ENCODE measurements at regions of chr14 and their contacts with region 1.

Region 1: DNA sequence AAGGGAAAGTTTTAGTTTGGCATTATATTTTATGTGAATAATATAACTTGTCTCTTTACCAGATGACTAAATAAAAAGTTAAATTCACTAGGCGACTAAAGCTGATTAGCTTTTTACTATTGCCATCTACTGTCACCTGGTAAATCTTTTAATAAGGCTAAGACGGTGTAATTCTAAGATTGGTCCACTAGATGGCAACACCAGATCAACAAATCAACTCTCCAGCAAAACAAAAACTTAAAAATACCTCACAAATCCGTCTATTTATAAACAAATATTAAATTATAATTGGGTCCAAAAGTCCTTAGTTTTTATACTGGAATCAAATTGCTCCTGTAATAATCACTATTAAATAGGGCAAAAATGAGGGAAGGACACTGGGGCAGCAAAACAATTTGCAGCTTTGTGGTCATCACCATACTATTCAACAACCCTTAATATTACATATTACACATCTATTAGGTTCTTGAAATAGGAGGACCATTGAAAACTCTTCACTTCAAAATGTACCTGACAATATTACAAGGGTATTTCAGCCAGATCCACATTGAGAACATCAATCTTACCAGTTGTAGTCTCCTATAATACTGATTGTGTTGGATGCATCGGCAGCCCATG is 47.9 kb downstream of the GALC start:
- DNase-seq: peak in 2 of 9 experiments; percentile 74 to 79
- ATAC-seq: peak; percentile 69
- H3K4me3 ChIP-seq: no peak overlapping the region
- H3K4me3 Mint-ChIP-seq: no peak overlapping the region
- H3K27ac ChIP-seq: no peak overlapping the region
- H3K27ac Mint-ChIP-seq: no peak overlapping the region
- H3K4me1 ChIP-seq: peaks cover 4% of the 10 kb centered on the region
- H3K4me1 Mint-ChIP-seq: peaks cover 16% of the 10 kb centered on the region
- H3K27me3 ChIP-seq: no peaks in the 10 kb centered on the region
- H3K27me3 Mint-ChIP-seq: no peaks in the 10 kb centered on the region
- CTCF ChIP-seq: peak; percentile 90

Region 2: DNA sequence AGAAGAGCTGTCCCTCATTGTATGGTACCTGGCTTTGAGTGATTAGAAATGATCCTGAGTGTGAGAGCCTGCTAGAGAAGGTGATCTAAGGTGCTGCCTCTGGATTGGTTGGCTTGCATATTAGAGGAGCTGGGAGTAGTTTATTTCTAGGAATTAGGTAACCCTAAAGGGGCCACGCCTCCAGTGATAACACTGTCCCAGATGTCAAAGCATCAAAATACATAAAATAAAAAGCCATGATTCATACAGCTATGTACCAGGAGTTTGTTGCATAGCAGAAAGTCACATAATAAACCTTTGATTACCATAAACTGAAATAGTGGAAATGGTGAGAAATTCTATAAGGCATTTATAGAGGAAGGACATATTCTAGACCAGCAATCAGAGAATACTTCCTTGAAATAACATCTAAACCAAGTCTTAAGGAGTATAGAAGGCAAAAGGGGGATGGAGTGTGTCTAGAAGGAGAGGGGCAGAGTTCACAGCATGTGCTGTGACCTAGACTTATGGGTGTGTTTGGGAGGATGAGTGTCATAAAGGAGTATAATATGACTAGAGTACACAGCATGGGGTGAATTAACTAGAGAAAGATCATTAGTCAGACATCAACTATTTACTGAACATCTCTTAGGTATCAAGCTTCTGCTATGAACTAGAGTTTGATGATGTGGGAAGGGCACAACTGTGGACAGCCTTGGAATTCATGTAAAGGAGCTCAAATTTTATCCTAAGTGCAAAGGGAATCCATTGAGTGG is 638.5 kb before region 1 on chr14:
- CTCF ChIA-PET with region 1: no interaction called
- POLR2A ChIA-PET with region 1: no interaction called
- intact Hi-C with region 1: no loop called
- DNase-seq: no peak
- ATAC-seq: no peak
- H3K4me3 ChIP-seq: no peak overlapping the region
- H3K4me3 Mint-ChIP-seq: no peak overlapping the region
- H3K27ac ChIP-seq: no peak overlapping the region
- H3K27ac Mint-ChIP-seq: no peak overlapping the region
- H3K4me1 ChIP-seq: no peaks in the 10 kb centered on the region
- H3K4me1 Mint-ChIP-seq: no peaks in the 10 kb centered on the region
- H3K27me3 ChIP-seq: no peaks in the 10 kb centered on the region
- H3K27me3 Mint-ChIP-seq: no peaks in the 10 kb centered on the region
- CTCF ChIP-seq: no peak

Region 3: GRCh38 chr14:87979689-87980088 is 34.6 kb after region 1 on chr14:
- CTCF ChIA-PET with region 1: interaction called, 14 read pairs
- POLR2A ChIA-PET with region 1: no interaction called
- intact Hi-C with region 1: no loop called
- DNase-seq: no peak
- ATAC-seq: no peak
- H3K4me3 ChIP-seq: no peak overlapping the region
- H3K4me3 Mint-ChIP-seq: no peak overlapping the region
- H3K27ac ChIP-seq: no peak overlapping the region
- H3K27ac Mint-ChIP-seq: no peak overlapping the region
- H3K4me1 ChIP-seq: no peaks in the 10 kb centered on the region
- H3K4me1 Mint-ChIP-seq: peaks cover 5% of the 10 kb centered on the region
- H3K27me3 ChIP-seq: no peaks in the 10 kb centered on the region
- H3K27me3 Mint-ChIP-seq: no peaks in the 10 kb centered on the region
- CTCF ChIP-seq: no peak

Region 4: GRCh38 chr14:88078525-88078924 is 133.4 kb after region 1 on chr14:
- CTCF ChIA-PET with region 1: interaction called, 11 read pairs
- POLR2A ChIA-PET with region 1: no interaction called
- intact Hi-C with region 1: no loop called
- DNase-seq: peak in 2 of 9 experiments; percentile 8 to 16
- ATAC-seq: no peak
- H3K4me3 ChIP-seq: no peak overlapping the region
- H3K4me3 Mint-ChIP-seq: no peak overlapping the region
- H3K27ac ChIP-seq: no peak overlapping the region
- H3K27ac Mint-ChIP-seq: no peak overlapping the region
- H3K4me1 ChIP-seq: no peaks in the 10 kb centered on the region
- H3K4me1 Mint-ChIP-seq: no peaks in the 10 kb centered on the region
- H3K27me3 ChIP-seq: no peaks in the 10 kb centered on the region
- H3K27me3 Mint-ChIP-seq: no peaks in the 10 kb centered on the region
- CTCF ChIP-seq: no peak

Region 5: GRCh38 chr14:88168498-88169165 is 223.5 kb after region 1 on chr14:
- CTCF ChIA-PET with region 1: interaction called, 120 read pairs
- POLR2A ChIA-PET with region 1: interaction called, 3 read pairs
- intact Hi-C with region 1: loop called (anchors 1 kb)
- DNase-seq: peak; percentile 24 to 77 (median 55)
- ATAC-seq: peak; percentile 96
- H3K4me3 ChIP-seq: no peak overlapping the region
- H3K4me3 Mint-ChIP-seq: peak overlapping the region; percentile 58
- H3K27ac ChIP-seq: no peak overlapping the region
- H3K27ac Mint-ChIP-seq: no peak overlapping the region
- H3K4me1 ChIP-seq: no peaks in the 10 kb centered on the region
- H3K4me1 Mint-ChIP-seq: peaks cover 16% of the 10 kb centered on the region
- H3K27me3 ChIP-seq: no peaks in the 10 kb centered on the region
- H3K27me3 Mint-ChIP-seq: peaks cover 19% of the 10 kb centered on the region
- CTCF ChIP-seq: peak; percentile 70

Region 6: GRCh38 chr14:88233915-88234314 is 288.8 kb after region 1 on chr14:
- CTCF ChIA-PET with region 1: interaction called, 14 read pairs
- POLR2A ChIA-PET with region 1: no interaction called
- intact Hi-C with region 1: loop called in 1 of 2 experiments (anchors 5 kb)
- DNase-seq: peak in 2 of 9 experiments; percentile 7 to 17
- ATAC-seq: no peak
- H3K4me3 ChIP-seq: no peak overlapping the region
- H3K4me3 Mint-ChIP-seq: no peak overlapping the region
- H3K27ac ChIP-seq: no peak overlapping the region
- H3K27ac Mint-ChIP-seq: no peak overlapping the region
- H3K4me1 ChIP-seq: no peaks in the 10 kb centered on the region
- H3K4me1 Mint-ChIP-seq: no peaks in the 10 kb centered on the region
- H3K27me3 ChIP-seq: no peaks in the 10 kb centered on the region
- H3K27me3 Mint-ChIP-seq: peaks cover 17% of the 10 kb centered on the region
- CTCF ChIP-seq: no peak

Region 7: DNA sequence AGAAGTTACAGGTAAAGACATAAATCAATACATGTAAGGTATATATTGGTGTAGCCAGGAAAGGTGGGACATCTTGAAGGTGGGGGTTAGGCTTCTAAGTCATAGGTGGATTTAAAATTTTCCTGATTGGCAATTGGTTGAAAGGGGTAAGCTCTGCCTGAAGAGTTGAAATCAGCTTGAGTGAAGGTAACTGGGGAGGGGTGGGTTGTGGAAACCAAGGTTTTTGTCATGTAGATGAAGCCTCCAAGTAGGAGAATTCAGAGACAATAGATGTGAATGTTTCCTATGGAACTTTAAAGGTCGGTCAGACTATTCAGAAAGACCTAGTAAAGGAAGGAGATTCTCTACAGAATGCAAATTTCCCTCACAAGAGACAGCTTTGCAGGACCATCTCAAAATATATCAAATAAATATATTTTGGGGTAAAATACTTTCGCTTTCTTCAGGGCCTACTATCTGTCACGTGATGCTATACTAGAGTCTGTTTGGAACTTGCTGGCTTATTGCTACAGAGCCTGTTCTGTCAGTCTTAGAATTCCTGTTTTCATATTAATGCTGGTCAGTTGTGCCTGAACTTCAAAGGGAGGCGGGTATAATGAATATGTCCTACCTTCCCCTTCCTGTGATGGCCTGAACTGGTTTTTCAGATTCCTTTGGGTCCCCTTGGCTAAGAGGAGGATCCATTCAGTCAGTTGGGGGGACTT is 419.8 kb after region 1 on chr14:
- CTCF ChIA-PET with region 1: no interaction called
- POLR2A ChIA-PET with region 1: no interaction called
- intact Hi-C with region 1: no loop called
- DNase-seq: no peak
- ATAC-seq: no peak
- H3K4me3 ChIP-seq: no peak overlapping the region
- H3K4me3 Mint-ChIP-seq: no peak overlapping the region
- H3K27ac ChIP-seq: no peak overlapping the region
- H3K27ac Mint-ChIP-seq: no peak overlapping the region
- H3K4me1 ChIP-seq: no peaks in the 10 kb centered on the region
- H3K4me1 Mint-ChIP-seq: no peaks in the 10 kb centered on the region
- H3K27me3 ChIP-seq: no peaks in the 10 kb centered on the region
- H3K27me3 Mint-ChIP-seq: peaks cover 23% of the 10 kb centered on the region
- CTCF ChIP-seq: no peak

Region 8: DNA sequence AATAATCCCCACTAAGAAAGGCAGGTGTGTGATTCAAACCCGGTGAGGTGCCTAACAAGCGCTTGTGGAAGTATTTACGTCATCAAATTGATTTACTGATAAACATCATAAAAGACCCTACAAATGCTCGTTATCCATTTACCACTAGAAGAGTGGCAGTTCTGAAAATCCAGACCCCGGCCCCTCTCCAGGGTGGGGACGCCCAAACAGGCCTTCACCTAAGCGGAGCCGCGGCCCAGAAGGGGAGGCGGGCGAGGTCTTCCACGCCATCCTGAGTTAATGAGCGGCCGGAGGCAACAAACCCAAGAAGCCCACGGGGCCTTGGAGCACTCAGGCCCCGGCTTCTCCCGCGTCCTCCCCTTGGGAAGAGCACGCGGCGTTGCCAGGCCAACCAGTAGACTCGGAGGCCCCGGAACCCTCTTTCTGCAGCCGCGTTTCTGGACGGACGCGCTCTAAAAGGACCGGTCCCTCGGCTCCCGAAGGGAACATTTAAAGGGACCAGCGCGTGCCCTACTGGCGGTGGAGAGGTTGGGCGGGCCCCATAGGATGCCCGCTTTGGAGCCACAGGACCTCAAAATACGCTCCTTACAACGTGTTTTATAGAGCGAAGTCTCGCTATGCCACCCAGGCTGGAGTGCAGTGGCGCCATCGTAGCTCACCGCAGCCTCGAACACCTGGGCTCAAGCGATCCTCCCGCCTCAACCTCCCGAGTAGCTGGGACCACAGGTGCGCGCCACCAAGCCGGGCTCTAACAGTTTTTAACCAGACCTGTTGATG is 606.2 kb after region 1 on chr14:
- CTCF ChIA-PET with region 1: no interaction called
- POLR2A ChIA-PET with region 1: no interaction called
- intact Hi-C with region 1: loop called in 1 of 2 experiments (anchors 10 kb)
- DNase-seq: peak in 7 of 9 experiments; percentile 23 to 71 (median 40)
- ATAC-seq: no peak
- H3K4me3 ChIP-seq: peak overlapping the region; percentile 36 to 47
- H3K4me3 Mint-ChIP-seq: peak overlapping the region; percentile 64
- H3K27ac ChIP-seq: no peak overlapping the region
- H3K27ac Mint-ChIP-seq: no peak overlapping the region
- H3K4me1 ChIP-seq: peaks cover 20% of the 10 kb centered on the region
- H3K4me1 Mint-ChIP-seq: peaks cover 11% of the 10 kb centered on the region
- H3K27me3 ChIP-seq: peaks cover 36 to 42% of the 10 kb centered on the region in 2 experiments
- H3K27me3 Mint-ChIP-seq: peaks cover 45% of the 10 kb centered on the region
- CTCF ChIP-seq: no peak